ENCODE measurements at regions of chr9 and their contacts with region 1.

Region 1: DNA sequence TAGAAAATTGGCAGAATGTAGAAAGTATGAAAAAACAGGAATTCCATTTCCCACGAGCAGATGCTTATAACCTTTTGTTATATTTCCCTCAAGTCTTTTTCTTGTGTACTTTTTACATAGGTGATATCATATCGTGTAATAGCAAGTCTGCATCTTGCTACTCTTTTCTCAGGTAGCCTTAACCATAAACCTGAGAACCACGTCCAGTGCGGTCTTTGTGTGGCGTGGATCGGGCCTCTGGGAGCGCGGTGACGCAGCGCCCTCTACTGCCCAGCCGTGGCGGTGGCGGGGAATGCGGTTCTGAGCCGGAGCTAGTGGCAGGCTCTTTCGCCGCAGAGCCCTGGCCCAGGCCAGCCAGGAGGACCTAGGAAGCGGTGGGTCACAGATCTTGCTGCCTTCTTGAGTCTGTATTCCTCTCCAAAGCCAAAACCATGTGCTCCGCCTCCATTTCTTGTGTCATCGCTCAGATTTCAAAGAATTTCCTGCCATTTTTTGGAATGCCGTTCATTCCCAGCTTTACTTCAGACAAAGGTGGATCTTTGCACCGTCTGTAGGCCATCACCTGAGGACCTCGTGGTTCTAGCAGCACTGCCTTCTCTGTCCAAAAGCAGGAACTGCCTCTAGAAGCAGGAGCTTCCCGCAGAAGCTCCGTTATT is 71.9 kb downstream of the MVB12B start:
- DNase-seq: peak; percentile 93
- ATAC-seq: peak; percentile 89

Region 2: DNA sequence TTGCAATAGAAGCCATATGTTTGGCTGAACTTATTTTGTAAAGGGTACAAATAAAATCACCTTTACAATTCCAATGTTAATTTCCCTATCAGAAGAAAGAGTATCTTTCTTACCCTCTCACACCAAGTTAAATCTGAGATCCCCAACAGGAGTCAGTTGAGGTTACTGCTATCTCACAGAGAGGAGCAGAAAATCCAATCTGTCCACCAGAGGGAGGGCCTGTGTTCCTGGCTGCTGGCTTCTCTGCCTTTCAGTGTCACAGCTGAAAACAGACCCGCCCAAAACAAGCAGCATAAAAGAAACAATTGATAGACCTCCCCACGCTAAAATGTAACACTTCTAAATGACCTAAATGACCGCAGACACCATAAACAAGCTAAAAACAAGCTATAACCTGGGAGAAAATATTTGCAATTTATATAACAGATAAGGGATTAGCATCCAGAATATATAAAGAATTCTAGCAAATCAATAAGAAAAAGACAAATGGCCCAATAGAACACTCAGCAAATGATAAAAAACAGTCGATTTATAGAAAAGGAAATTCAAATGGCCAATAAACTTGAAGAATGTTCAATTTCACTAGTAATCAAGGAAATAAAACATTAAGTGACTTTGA is 96.4 kb before region 1 on chr9:
- intact Hi-C with region 1: loop called (anchors 1 kb)
- DNase-seq: no peak
- ATAC-seq: peak; percentile 80

Region 3: DNA sequence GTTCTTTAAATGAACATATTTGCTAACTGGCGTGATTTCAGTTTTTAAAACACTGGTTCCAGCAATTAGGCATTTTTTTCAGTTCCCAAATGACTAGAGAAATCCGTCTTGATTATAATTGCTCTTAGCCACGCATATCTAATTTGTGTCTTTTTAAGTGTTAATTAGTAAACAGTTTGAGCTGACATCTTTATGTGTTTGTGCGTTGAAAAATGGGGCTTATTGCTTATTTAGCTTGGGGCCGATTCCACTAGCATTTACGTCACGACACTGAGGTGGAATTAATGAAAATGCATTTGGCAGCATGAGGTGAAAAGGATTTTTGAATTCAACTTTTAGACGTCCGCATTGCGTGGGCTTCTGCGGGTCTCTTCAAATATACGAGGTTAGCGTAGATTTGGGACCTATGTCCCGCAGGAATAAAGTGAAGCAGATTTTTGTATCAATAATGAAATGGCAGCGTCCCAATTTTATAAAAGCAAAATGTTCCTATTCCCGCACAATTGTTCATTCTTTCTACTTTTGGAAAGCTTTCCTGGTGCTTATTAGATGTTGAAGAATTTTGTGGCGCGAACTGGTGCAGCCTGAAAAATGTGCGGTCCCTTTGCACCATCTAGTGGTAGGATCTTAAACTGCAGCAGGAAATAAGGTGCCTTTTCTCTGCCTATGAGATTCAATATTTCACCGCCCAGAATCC is 92.5 kb after region 1 on chr9:
- intact Hi-C with region 1: loop called (anchors 2 kb)
- DNase-seq: no peak
- ATAC-seq: peak; percentile 61

Region 4: GRCh38 chr9:126733005-126733404 is 334.5 kb after region 1 on chr9:
- intact Hi-C with region 1: no loop called
- DNase-seq: no peak
- ATAC-seq: no peak